ENCODE measurements at regions of chr17 and their contacts with region 1.

Region 1: DNA sequence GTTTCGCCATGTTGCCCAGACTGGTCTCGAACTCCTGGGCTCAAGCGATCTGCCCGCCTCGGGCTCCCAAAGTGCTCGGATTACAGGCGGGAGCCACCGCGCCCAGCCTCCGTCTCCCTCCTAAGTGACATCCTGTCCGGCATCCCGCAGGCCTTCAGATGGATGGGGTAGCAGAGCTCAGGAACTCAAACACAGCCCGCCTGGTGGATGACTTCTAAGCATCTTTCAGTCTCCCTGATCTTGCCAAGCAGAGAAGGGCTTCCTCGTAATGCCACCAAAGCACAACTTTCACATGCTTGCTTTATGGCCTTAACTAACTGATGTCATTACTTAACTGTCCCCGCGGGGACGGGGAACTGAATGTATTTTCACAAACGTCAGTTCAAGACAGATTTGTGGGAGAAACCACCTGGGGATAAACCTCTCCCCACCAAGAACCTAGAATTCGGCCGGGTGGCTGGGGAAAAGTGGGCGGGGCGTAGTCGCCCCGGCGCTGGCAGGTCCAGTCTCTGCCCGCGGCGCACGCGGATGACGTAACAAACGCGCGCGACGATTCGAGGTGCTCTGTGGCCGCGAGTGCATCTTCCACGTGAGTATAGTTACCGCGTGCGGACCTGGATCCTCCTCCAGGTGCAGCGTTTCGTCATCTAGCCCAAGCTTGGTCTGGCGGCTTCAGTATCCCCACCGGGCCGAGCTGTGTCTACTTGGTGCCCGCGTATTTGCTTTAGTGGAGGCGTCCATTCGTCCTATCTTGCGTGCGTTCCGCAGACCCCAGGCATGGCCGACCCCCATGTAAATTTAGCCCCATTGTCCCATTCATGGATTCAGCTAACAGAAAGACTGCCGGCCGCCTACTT is at the start of gene PFAS:
- DNase-seq: peak; percentile 98 to 99
- ATAC-seq: peak; percentile 51 to 71 (median 63)
- H3K4me3 ChIP-seq: peak within 1 kb of the TSS; percentile 74
- H3K4me3 Mint-ChIP-seq: peak within 1 kb of the TSS; percentile 94
- H3K27ac ChIP-seq: peak within 1 kb of the TSS; percentile 99
- H3K27ac Mint-ChIP-seq: peak within 1 kb of the TSS; percentile 92 to 97
- H3K4me1 ChIP-seq: peaks cover 37% of the 10 kb centered on the region
- H3K4me1 Mint-ChIP-seq: peaks cover 33 to 51% of the 10 kb centered on the region in 2 donors
- H3K27me3 ChIP-seq: no peaks in the 10 kb centered on the region
- H3K27me3 Mint-ChIP-seq: no peaks in the 10 kb centered on the region
- CTCF ChIP-seq: no peak
- total RNA-seq, gene PFAS: 23.6 to 30.0 (median 24.0) TPM

Region 2: DNA sequence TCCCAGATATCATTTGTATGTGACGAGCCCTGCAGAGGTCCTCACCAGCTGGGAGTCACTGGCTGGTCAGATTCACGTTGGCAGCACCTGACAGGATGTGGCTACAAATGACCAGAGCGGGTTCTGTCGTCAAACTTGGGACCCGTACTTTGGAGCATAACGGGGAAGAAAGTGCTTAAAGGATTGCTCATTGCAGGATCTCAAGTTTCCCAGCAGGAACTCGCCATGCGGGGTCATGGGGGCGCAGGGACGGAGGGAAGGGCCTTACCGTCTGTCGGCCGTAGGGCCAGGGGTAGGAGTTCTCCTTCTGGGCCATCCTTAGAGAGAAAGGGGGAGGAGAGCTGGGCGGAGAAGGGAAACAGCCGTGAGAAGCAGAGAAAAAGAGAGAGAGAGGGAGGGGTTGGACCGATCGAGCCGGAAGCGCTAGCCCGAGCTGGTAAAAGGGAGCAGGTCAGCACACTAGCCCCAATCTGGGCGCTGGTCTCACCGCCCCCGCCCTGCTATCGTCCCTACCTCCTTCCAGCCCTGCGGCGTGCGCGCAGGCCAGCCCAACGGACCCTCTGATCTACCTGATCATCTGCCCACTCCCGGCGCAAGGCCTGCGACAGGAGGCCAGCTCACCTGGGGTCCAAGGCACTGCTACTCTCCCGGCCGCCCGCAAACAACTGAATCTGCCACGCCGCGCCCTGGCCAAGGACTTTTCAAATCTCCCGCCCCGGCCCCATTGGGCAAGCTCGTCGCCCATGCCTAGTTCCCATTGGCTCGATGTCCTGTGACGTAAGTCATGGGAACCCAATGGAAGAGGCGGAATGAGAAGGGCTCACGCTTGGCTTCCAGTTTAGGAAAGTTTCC is 38.8 kb before region 1 on chr17 and contains the start of gene AURKB:
- intact Hi-C with region 1: loop called (anchors 5 kb)
- DNase-seq: peak; percentile 91 to 97
- ATAC-seq: peak; percentile 97 to 100 (median 99)
- H3K4me3 ChIP-seq: peak within 1 kb of the TSS; percentile 63
- H3K4me3 Mint-ChIP-seq: peak within 1 kb of the TSS; percentile 98
- H3K27ac ChIP-seq: peak within 1 kb of the TSS; percentile 56
- H3K27ac Mint-ChIP-seq: peak within 1 kb of the TSS; percentile 85 to 86
- H3K4me1 ChIP-seq: peaks cover 16% of the 10 kb centered on the region
- H3K4me1 Mint-ChIP-seq: peaks cover 20 to 24% of the 10 kb centered on the region in 2 donors
- H3K27me3 ChIP-seq: no peaks in the 10 kb centered on the region
- H3K27me3 Mint-ChIP-seq: no peaks in the 10 kb centered on the region
- CTCF ChIP-seq: no peak
- total RNA-seq, gene AURKB: 2.1 to 4.8 (median 4.1) TPM

Region 3: DNA sequence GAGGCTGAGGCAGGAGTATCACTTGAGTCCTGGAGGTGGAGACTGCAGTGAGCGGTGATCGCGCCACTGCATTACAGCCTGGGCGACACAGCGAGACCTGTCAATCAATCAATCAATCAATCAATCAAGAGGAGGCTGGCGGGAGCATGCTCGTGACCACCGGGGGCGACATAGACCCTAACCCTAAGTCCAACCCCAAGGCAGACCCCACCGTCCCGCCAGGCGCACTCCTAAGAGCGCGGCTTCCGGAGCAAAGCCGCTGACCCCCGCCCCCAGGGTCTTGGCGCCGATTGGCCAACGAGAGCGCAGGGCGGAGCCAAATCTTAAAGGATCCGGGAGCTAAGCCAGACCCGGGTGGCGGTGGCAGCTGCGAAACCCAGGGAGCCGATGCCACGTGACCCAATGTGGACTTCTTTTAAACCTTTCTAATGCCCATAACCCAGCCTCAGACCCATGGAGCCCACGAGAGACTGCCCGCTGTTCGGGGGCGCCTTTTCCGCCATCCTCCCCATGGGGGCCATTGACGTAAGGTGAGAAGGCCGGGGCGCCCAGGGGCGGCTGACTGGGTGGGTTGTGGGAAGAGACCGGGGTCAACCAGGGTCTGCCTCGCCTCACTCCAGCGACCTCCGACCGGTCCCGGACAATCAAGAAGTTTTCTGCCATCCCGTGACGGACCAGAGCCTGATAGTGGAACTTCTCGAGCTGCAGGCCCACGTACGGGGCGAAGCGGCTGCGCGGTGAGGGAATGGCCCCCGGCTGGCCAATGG is 39.5 kb after region 1 on chr17 and contains the start of gene RANGRF:
- intact Hi-C with region 1: loop called (anchors 2 kb)
- DNase-seq: peak; percentile 82 to 88
- ATAC-seq: peak; percentile 93 to 94 (median 94)
- H3K4me3 ChIP-seq: peak within 1 kb of the TSS; percentile 94
- H3K4me3 Mint-ChIP-seq: peak within 1 kb of the TSS; percentile 96
- H3K27ac ChIP-seq: peak within 1 kb of the TSS; percentile 90
- H3K27ac Mint-ChIP-seq: peak within 1 kb of the TSS; percentile 95 to 97
- H3K4me1 ChIP-seq: peaks cover 29% of the 10 kb centered on the region
- H3K4me1 Mint-ChIP-seq: peaks cover 20 to 46% of the 10 kb centered on the region in 2 donors
- H3K27me3 ChIP-seq: no peaks in the 10 kb centered on the region
- H3K27me3 Mint-ChIP-seq: no peaks in the 10 kb centered on the region
- CTCF ChIP-seq: no peak
- total RNA-seq, gene RANGRF: 34.4 to 51.5 (median 44.6) TPM

Region 4: DNA sequence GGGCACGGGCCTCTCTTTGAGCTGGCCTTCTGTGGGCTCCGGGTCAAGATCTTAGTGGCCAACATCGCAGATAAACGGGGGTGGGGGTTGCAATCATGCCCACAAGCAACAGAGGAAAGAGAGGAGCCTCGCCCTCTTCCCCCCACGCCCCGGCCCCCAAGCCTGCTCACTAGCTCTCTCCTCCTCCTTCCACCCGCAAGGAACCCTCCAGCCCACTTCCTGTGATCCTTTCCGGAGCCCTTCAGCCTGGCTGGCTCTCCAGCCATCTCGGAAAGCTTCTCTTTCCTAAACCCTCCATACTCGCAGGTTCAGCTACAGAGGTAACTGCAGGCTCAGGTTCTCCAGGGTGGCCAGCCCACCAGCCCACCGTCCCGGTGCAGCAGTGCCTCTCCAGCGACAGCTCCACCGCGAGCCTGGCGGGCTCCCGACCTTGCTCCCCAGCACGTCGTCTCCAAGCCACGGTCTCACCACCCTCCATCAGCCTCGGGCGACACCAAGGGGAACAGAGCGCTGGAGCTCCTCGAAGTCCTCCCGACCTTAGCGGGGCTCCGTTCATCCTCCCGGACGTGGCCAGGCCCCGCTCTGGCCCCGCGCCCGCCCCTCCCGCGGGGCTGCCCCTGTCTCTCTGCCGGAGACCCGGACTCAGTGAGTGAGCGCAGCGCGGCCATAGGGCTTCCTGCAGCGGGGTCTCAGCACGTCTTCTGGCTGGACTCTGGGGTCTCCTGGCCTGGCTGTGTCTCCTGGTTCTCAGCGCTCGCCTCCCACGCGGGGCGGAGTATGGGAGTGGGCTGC is 77.7 kb after region 1 on chr17:
- intact Hi-C with region 1: no loop called
- DNase-seq: peak in 1 of 2 donors; percentile 42
- ATAC-seq: peak; percentile 42 to 75 (median 54)
- H3K4me3 ChIP-seq: peak overlapping the region; percentile 17
- H3K4me3 Mint-ChIP-seq: peak overlapping the region; percentile 68
- H3K27ac ChIP-seq: no peak overlapping the region
- H3K27ac Mint-ChIP-seq: peak overlapping the region in 1 of 2 donors; percentile 56
- H3K4me1 ChIP-seq: peaks cover 17% of the 10 kb centered on the region
- H3K4me1 Mint-ChIP-seq: peaks cover 13% of the 10 kb centered on the region in 2 donors
- H3K27me3 ChIP-seq: peaks cover 14% of the 10 kb centered on the region
- H3K27me3 Mint-ChIP-seq: peaks cover 14 to 33% of the 10 kb centered on the region in 2 donors
- CTCF ChIP-seq: no peak